Natural killer cell (primary cell): ENCODE measurements at regions of chr11 and their contacts with region 1.

Region 1: DNA sequence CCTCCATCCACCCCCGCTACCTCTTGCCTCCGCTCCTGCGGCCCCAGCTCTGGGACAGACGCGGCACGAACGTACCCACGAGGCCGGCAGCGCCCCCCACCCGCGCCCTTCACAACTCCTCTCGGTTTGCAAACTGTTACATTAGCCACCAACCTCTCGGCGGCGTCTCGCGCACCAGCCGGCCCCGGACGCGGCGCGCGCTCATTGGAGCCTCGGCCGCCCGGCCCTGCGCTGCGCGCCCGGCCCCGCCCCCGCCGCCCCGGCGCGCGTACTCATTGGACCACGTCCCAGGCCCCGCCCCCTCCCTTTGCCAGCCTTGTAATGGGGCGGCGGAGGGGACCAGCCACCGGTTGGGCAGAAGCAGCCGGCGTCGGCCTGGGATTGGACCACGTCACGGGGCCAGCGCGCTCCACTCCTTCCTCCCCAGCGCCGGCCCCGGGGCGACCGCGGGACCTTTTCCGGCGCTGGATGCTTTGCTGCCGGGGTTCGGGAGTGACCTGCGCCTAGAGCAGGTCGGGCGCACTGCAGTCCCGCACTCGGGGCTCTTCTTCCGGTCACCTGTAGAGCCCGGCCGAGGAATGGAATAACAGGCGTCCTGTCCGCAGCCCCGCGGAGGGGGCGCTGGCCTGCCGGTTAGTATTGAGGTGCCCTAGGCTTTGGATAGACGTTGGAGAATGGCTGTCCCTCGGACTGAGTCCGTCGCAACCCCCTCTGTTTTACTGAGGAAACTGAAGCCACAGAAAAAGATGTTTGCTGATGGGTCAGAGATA is at the start of gene HYOU1:
- DNase-seq: peak; percentile 98
- ATAC-seq: peak; percentile 92 to 99 (median 93)
- H3K4me3 ChIP-seq: peak within 1 kb of the TSS; percentile 70
- H3K4me3 Mint-ChIP-seq: peak within 1 kb of the TSS; percentile 98
- H3K27ac ChIP-seq: peak within 1 kb of the TSS; percentile 77
- H3K27ac Mint-ChIP-seq: peak within 1 kb of the TSS; percentile 96 to 98
- H3K4me1 ChIP-seq: peaks cover 24% of the 10 kb centered on the region
- H3K4me1 Mint-ChIP-seq: peaks cover 33 to 48% of the 10 kb centered on the region in 2 donors
- H3K27me3 ChIP-seq: no peaks in the 10 kb centered on the region
- H3K27me3 Mint-ChIP-seq: no peaks in the 10 kb centered on the region
- CTCF ChIP-seq: no peak
- total RNA-seq, gene HYOU1: 114 to 146 (median 123) TPM

Region 2: GRCh38 chr11:118699506-118700220 is 357.5 kb before region 1 on chr11:
- intact Hi-C with region 1: no loop called
- DNase-seq: peak; percentile 69 to 94
- ATAC-seq: peak; percentile 90 to 97 (median 91)
- H3K4me3 ChIP-seq: no peak overlapping the region
- H3K4me3 Mint-ChIP-seq: peak overlapping the region; percentile 78
- H3K27ac ChIP-seq: peak overlapping the region; percentile 81
- H3K27ac Mint-ChIP-seq: peak overlapping the region; percentile 88 to 94
- H3K4me1 ChIP-seq: peaks cover 59% of the 10 kb centered on the region
- H3K4me1 Mint-ChIP-seq: peaks cover 17 to 28% of the 10 kb centered on the region in 2 donors
- H3K27me3 ChIP-seq: no peaks in the 10 kb centered on the region
- H3K27me3 Mint-ChIP-seq: no peaks in the 10 kb centered on the region
- CTCF ChIP-seq: no peak

Region 3: DNA sequence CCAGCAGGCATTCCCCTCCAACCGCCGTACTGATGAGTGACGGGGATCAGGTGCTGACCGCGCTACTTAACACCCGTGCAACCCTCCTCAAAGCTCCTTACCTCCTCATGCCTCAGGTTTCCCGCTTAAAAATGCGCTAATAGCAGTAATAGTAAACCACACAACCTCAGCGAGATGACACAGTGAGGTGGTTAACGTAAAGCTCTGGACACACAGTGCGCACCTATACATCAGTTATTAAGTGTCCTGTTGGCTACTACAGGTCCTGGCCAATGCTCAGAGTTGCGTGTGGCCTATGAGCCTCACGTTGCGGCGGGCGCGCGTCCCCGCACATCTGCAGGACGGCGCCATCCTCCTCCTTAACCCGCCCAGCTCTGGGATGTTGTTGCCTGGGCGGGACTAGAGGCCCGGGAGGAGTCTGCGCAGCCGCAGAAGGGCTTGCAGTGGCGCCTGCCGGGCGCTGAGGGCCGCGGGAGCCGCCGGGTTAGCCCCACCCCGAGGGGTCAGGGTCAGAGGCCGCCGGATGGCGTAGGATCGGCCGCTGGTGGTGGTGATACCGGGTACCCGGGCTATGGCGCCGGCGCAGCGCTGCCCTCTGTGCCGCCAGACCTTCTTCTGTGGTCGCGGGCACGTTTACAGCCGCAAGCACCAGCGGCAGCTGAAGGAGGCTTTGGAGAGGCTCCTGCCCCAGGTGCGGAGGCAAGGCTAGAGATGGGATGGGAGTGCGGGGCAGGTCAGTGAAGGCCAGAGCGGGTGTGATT is 59.4 kb before region 1 on chr11 and contains the start of gene CENATAC:
- intact Hi-C with region 1: loop called (anchors 1 kb)
- DNase-seq: peak; percentile 91 to 97
- ATAC-seq: peak; percentile 92 to 98 (median 95)
- H3K4me3 ChIP-seq: peak within 1 kb of the TSS; percentile 88
- H3K4me3 Mint-ChIP-seq: peak within 1 kb of the TSS; percentile 97
- H3K27ac ChIP-seq: peak within 1 kb of the TSS; percentile 93
- H3K27ac Mint-ChIP-seq: peak within 1 kb of the TSS; percentile 94
- H3K4me1 ChIP-seq: peaks cover 23% of the 10 kb centered on the region
- H3K4me1 Mint-ChIP-seq: peaks cover 30 to 33% of the 10 kb centered on the region in 2 donors
- H3K27me3 ChIP-seq: no peaks in the 10 kb centered on the region
- H3K27me3 Mint-ChIP-seq: no peaks in the 10 kb centered on the region
- CTCF ChIP-seq: no peak
- total RNA-seq, gene CENATAC: 121 to 143 (median 122) TPM

Region 4: GRCh38 chr11:119030329-119031049 is 26.7 kb before region 1 on chr11 and contains the start of gene SLC37A4:
- intact Hi-C with region 1: loop called (anchors 2 kb)
- DNase-seq: peak; percentile 98 to 99
- ATAC-seq: peak; percentile 96 to 98 (median 97)
- H3K4me3 ChIP-seq: peak within 1 kb of the TSS; percentile 74
- H3K4me3 Mint-ChIP-seq: peak within 1 kb of the TSS; percentile 84
- H3K27ac ChIP-seq: peak within 1 kb of the TSS; percentile 55
- H3K27ac Mint-ChIP-seq: peak within 1 kb of the TSS; percentile 14 to 85
- H3K4me1 ChIP-seq: peaks cover 13% of the 10 kb centered on the region
- H3K4me1 Mint-ChIP-seq: peaks cover under 1 to 16% of the 10 kb centered on the region in 2 donors
- H3K27me3 ChIP-seq: no peaks in the 10 kb centered on the region
- H3K27me3 Mint-ChIP-seq: no peaks in the 10 kb centered on the region
- CTCF ChIP-seq: peak; percentile 82
- total RNA-seq, gene SLC37A4: 4.6 to 7.7 (median 6.5) TPM

Region 5: GRCh38 chr11:119084663-119085436 is 27.7 kb after region 1 on chr11 and contains the start of gene HMBS:
- intact Hi-C with region 1: loop called (anchors 1 kb)
- DNase-seq: peak; percentile 93 to 97
- ATAC-seq: peak; percentile 93 to 97 (median 95)
- H3K4me3 ChIP-seq: peak within 1 kb of the TSS; percentile 83
- H3K4me3 Mint-ChIP-seq: peak within 1 kb of the TSS; percentile 92
- H3K27ac ChIP-seq: peak within 1 kb of the TSS; percentile 52
- H3K27ac Mint-ChIP-seq: peak within 1 kb of the TSS; percentile 92 to 94
- H3K4me1 ChIP-seq: peaks cover 24% of the 10 kb centered on the region
- H3K4me1 Mint-ChIP-seq: peaks cover 12 to 16% of the 10 kb centered on the region in 2 donors
- H3K27me3 ChIP-seq: no peaks in the 10 kb centered on the region
- H3K27me3 Mint-ChIP-seq: no peaks in the 10 kb centered on the region
- CTCF ChIP-seq: no peak
- total RNA-seq, gene HMBS: 6.1 to 10.1 (median 6.7) TPM

Region 6: GRCh38 chr11:119196833-119197483 is 139.8 kb after region 1 on chr11:
- intact Hi-C with region 1: loop called (anchors 10 kb)
- DNase-seq: peak; percentile 36 to 91
- ATAC-seq: peak; percentile 89 to 98 (median 96)
- H3K4me3 ChIP-seq: no peak overlapping the region
- H3K4me3 Mint-ChIP-seq: no peak overlapping the region
- H3K27ac ChIP-seq: no peak overlapping the region
- H3K27ac Mint-ChIP-seq: no peak overlapping the region
- H3K4me1 ChIP-seq: no peaks in the 10 kb centered on the region
- H3K4me1 Mint-ChIP-seq: peaks cover 0 to 9% of the 10 kb centered on the region in 2 donors
- H3K27me3 ChIP-seq: no peaks in the 10 kb centered on the region
- H3K27me3 Mint-ChIP-seq: peaks cover 7 to 8% of the 10 kb centered on the region in 2 donors
- CTCF ChIP-seq: peak; percentile 76